MCF 10A (cell line): ENCODE measurements at regions of chr6 and their contacts with region 1.

Region 1: DNA sequence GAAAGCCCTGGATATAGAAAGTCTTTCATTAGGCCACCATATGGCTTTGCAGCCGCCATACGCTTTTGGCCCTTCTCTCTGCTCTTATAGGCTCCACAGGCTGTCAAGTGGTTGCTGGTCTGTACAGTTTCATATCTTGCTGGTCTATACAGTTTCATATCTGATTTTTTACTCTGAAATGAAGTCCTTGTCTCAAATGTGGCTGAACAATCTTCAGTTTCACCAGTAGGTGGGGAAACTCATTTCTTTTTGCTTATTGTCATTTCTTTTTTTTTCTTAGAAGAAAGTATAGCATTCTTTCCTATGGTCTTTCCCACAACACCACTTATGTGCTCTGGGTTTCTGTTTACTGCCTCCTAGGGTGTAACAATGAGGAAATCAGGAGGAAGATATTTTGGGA is 771.4 kb upstream of the MMS22L start:
- DNase-seq: no peak
- H3K4me3 Mint-ChIP-seq: no peak overlapping the region
- H3K27ac Mint-ChIP-seq: no peak overlapping the region
- H3K4me1 Mint-ChIP-seq: no peaks in the 10 kb centered on the region
- H3K27me3 Mint-ChIP-seq: peaks cover 76% of the 10 kb centered on the region
- CTCF ChIP-seq: peak; percentile 11

Region 2: GRCh38 chr6:98067375-98067774 is 12.9 kb after region 1 on chr6:
- CTCF ChIA-PET with region 1: interaction called, 3 read pairs
- POLR2A ChIA-PET with region 1: no interaction called
- intact Hi-C with region 1: loop called (anchors 1 kb)
- DNase-seq: no peak
- H3K4me3 Mint-ChIP-seq: no peak overlapping the region
- H3K27ac Mint-ChIP-seq: no peak overlapping the region
- H3K4me1 Mint-ChIP-seq: no peaks in the 10 kb centered on the region
- H3K27me3 Mint-ChIP-seq: peaks cover 31% of the 10 kb centered on the region
- CTCF ChIP-seq: no peak